Natural killer cell (primary cell): ENCODE measurements at regions of chr16 and their contacts with region 1.

Region 1: DNA sequence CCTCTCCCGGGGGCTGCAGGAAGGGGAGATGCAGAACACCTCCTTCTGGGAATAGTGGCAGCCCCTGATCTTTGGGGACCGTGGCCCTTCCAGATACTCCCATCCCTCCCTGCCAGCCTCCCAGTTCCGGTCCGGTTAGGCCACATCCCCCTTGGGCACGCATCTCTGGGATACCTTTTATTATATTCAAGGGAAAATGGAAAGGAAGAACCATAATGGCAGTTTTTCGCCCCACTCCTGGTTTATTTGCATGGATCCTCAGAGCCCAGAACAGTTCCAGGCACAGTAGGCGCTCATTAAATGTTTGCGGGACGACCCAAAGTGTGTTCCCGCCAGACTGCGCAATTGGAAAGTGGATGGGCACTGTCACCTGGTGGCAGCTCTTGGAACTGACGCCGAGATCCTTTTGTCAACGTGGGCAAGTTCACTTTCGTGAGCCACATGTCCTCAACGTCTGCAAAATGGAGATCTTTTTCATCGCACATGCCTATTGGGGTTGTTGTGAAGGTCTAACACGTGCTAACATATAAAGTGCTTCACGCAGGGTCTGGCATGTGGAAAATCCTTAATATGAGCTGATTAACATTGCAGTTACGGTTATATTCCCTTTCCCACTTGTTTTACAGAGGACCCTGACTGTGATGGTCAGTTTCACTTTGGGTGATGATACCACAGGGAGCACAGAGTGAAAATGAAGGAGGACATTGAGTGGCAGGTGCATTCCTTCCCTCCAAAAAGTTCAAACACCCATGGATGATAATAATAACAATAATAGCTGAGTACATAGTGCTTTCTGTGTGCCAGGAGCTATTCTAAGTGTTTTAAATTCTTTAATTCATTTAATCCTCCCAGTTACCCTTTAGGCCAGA is 1.7 kb upstream of the GPRC5B start:
- DNase-seq: peak; percentile 55 to 90
- ATAC-seq: peak; percentile 51 to 72 (median 69)
- H3K4me3 ChIP-seq: no peak overlapping the region
- H3K4me3 Mint-ChIP-seq: peak overlapping the region; percentile 79
- H3K27ac ChIP-seq: no peak overlapping the region
- H3K27ac Mint-ChIP-seq: no peak overlapping the region
- H3K4me1 ChIP-seq: peaks cover 27% of the 10 kb centered on the region
- H3K4me1 Mint-ChIP-seq: peaks cover 15 to 23% of the 10 kb centered on the region in 2 donors
- H3K27me3 ChIP-seq: peaks cover 22% of the 10 kb centered on the region
- H3K27me3 Mint-ChIP-seq: peaks cover 30 to 32% of the 10 kb centered on the region in 2 donors
- CTCF ChIP-seq: peak; percentile 85

Region 2: GRCh38 chr16:19601083-19601976 is 285.0 kb before region 1 on chr16:
- intact Hi-C with region 1: loop called (anchors 1 kb)
- DNase-seq: peak in 1 of 2 donors; percentile 71
- ATAC-seq: no peak
- H3K4me3 ChIP-seq: no peak overlapping the region
- H3K4me3 Mint-ChIP-seq: no peak overlapping the region
- H3K27ac ChIP-seq: no peak overlapping the region
- H3K27ac Mint-ChIP-seq: no peak overlapping the region
- H3K4me1 ChIP-seq: no peaks in the 10 kb centered on the region
- H3K4me1 Mint-ChIP-seq: peaks cover 0 to 10% of the 10 kb centered on the region in 2 donors
- H3K27me3 ChIP-seq: no peaks in the 10 kb centered on the region
- H3K27me3 Mint-ChIP-seq: no peaks in the 10 kb centered on the region
- CTCF ChIP-seq: peak; percentile 38

Region 3: GRCh38 chr16:19860166-19861041 is 25.9 kb before region 1 on chr16:
- intact Hi-C with region 1: no loop called
- DNase-seq: no peak
- ATAC-seq: no peak
- H3K4me3 ChIP-seq: no peak overlapping the region
- H3K4me3 Mint-ChIP-seq: no peak overlapping the region
- H3K27ac ChIP-seq: no peak overlapping the region
- H3K27ac Mint-ChIP-seq: no peak overlapping the region
- H3K4me1 ChIP-seq: no peaks in the 10 kb centered on the region
- H3K4me1 Mint-ChIP-seq: no peaks in the 10 kb centered on the region
- H3K27me3 ChIP-seq: no peaks in the 10 kb centered on the region
- H3K27me3 Mint-ChIP-seq: peaks cover 0 to 14% of the 10 kb centered on the region in 2 donors
- CTCF ChIP-seq: no peak

Region 4: DNA sequence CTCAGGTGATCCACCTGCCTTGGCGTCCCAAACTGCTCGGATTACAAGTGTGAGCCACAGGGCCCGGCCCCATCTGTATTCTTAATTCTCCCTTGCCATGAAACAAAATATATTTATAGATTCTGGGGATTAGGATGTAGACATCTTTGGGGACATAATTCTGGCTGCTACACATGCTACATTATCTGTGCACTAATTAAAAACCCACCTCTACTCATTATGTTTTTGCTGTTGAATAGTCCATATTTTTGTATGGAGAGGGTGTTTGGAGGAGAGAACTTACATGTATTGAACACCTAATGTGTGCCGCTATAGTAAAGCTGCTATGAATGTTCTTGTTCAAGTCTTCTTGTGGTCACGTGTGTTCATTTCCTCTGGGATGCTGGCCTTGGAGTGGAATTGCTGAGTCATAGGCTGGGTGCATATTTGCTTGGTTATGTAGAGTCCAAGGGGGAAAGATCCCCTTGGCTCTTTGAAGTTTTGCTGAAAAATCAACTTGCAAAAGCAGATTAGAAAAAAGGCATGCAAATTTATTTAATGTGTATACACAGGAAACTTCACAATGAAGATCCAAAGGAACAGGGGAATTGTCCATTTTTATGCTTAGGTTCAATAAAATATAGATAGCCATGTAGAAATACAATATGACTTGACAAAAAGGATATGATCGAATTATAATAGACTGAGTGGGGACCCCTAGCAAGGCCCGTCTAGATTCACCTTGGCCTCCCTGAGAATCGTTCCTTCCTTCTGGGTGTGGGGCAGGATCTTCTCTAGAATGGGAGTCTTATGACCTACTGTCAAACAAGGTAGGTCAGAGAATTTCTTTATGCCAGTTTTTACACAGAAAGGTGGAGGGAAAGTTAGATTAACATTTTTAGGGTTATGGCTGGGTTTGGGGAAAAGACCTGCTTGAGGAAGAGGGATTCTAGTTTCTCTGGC is 40.4 kb after region 1 on chr16:
- intact Hi-C with region 1: no loop called
- DNase-seq: no peak
- ATAC-seq: no peak
- H3K4me3 ChIP-seq: no peak overlapping the region
- H3K4me3 Mint-ChIP-seq: no peak overlapping the region
- H3K27ac ChIP-seq: no peak overlapping the region
- H3K27ac Mint-ChIP-seq: no peak overlapping the region
- H3K4me1 ChIP-seq: no peaks in the 10 kb centered on the region
- H3K4me1 Mint-ChIP-seq: no peaks in the 10 kb centered on the region
- H3K27me3 ChIP-seq: no peaks in the 10 kb centered on the region
- H3K27me3 Mint-ChIP-seq: peaks cover 8 to 14% of the 10 kb centered on the region in 2 donors
- CTCF ChIP-seq: no peak

Region 5: GRCh38 chr16:19980632-19981265 is 94.4 kb after region 1 on chr16:
- intact Hi-C with region 1: no loop called
- DNase-seq: no peak
- ATAC-seq: no peak
- H3K4me3 ChIP-seq: no peak overlapping the region
- H3K4me3 Mint-ChIP-seq: no peak overlapping the region
- H3K27ac ChIP-seq: no peak overlapping the region
- H3K27ac Mint-ChIP-seq: no peak overlapping the region
- H3K4me1 ChIP-seq: no peaks in the 10 kb centered on the region
- H3K4me1 Mint-ChIP-seq: no peaks in the 10 kb centered on the region
- H3K27me3 ChIP-seq: no peaks in the 10 kb centered on the region
- H3K27me3 Mint-ChIP-seq: peaks cover 0 to 9% of the 10 kb centered on the region in 2 donors
- CTCF ChIP-seq: no peak

Region 6: GRCh38 chr16:20166531-20167235 is 280.4 kb after region 1 on chr16:
- intact Hi-C with region 1: no loop called
- DNase-seq: no peak
- ATAC-seq: no peak
- H3K4me3 ChIP-seq: no peak overlapping the region
- H3K4me3 Mint-ChIP-seq: no peak overlapping the region
- H3K27ac ChIP-seq: no peak overlapping the region
- H3K27ac Mint-ChIP-seq: no peak overlapping the region
- H3K4me1 ChIP-seq: no peaks in the 10 kb centered on the region
- H3K4me1 Mint-ChIP-seq: no peaks in the 10 kb centered on the region
- H3K27me3 ChIP-seq: no peaks in the 10 kb centered on the region
- H3K27me3 Mint-ChIP-seq: peaks cover 0 to 3% of the 10 kb centered on the region in 2 donors
- CTCF ChIP-seq: no peak